Naive thymus-derived CD4-positive, alpha-beta T cell (primary cell): ENCODE measurements at regions of chr16 and their contacts with region 1.

Region 1: DNA sequence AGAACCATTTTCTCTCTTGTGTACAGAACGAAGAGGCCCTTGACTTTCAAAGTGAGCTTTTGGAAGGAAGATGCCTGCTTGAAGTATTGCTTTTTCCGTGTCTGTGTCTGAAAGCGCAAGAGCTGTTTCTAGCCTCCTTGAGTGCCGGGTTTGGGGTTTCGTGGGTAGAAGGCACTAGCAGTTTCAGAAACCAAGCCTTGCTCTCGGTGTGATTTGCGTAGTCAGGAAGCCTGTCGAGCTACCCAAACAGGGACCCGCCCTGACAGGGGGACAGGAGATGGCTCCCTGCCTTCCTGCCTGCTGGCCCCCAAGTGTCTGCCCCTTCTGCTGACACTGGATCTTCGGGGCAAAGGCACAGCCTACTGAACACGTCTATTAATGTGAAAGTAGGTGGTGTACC is 322.0 kb downstream of the MAF start:
- DNase-seq: peak in 8 of 9 donors; percentile 14 to 64 (median 44)
- ATAC-seq: peak; percentile 85
- H3K4me3 ChIP-seq: peak overlapping the region; percentile 22
- H3K4me3 Mint-ChIP-seq: peak overlapping the region; percentile 5 to 74 (median 55)
- H3K27ac ChIP-seq: no peak overlapping the region
- H3K27ac Mint-ChIP-seq: peak overlapping the region in 8 of 9 donors; percentile 10 to 91 (median 63)
- H3K4me1 ChIP-seq: peaks cover 16 to 53% of the 10 kb centered on the region in 2 donors
- H3K4me1 Mint-ChIP-seq: peaks cover 16 to 83% (median 34%) of the 10 kb centered on the region in 7 donors
- H3K27me3 ChIP-seq: no peaks in the 10 kb centered on the region
- H3K27me3 Mint-ChIP-seq: peaks cover 0 to 26% (median 4%) of the 10 kb centered on the region in 5 donors

Region 2: GRCh38 chr16:78823027-78823426 is 455.5 kb before region 1 on chr16:
- CTCF ChIA-PET with region 1: no interaction called
- POLR2A ChIA-PET with region 1: no interaction called
- intact Hi-C with region 1: no loop called
- DNase-seq: no peak
- ATAC-seq: no peak
- H3K4me3 ChIP-seq: no peak overlapping the region
- H3K4me3 Mint-ChIP-seq: no peak overlapping the region
- H3K27ac ChIP-seq: no peak overlapping the region
- H3K27ac Mint-ChIP-seq: no peak overlapping the region
- H3K4me1 ChIP-seq: no peaks in the 10 kb centered on the region
- H3K4me1 Mint-ChIP-seq: no peaks in the 10 kb centered on the region
- H3K27me3 ChIP-seq: no peaks in the 10 kb centered on the region
- H3K27me3 Mint-ChIP-seq: no peaks in the 10 kb centered on the region

Region 3: DNA sequence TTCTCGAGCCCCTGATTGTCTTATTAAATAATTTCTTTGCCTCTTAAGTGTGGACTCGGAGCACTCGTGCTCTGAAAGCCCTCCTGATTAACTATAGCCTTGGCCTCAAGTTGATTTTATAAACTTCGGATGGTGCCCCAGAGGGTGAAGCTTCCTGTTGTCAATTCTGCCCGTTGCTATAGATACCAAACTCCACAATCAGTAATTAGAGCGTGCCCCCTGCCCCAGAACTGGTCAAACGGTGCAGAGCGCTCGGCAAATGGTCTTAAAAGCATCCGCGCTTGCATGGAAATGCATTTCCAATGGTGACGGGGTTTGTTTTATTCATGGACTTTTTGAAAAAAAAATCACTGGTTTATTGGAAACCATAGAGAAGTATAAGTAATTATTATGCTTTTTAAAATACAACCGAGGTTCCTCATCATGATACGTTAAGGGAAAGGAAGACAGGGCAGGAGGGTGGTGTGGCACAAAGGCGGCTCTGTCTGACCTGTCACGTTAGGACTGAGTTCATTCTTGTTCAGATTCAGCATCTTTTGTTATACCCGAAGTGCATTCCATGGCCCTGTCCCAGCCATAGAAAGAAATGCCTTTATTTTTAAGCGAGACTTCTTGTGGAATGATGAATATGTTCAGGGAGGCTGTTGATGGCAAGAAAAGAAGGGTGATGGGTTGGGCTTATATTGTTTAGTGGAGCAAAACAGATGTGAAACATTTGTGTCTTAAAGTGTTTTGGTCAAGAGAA is 154.3 kb before region 1 on chr16:
- CTCF ChIA-PET with region 1: no interaction called
- POLR2A ChIA-PET with region 1: no interaction called
- intact Hi-C with region 1: no loop called
- DNase-seq: no peak
- ATAC-seq: no peak
- H3K4me3 ChIP-seq: no peak overlapping the region
- H3K4me3 Mint-ChIP-seq: no peak overlapping the region
- H3K27ac ChIP-seq: no peak overlapping the region
- H3K27ac Mint-ChIP-seq: no peak overlapping the region
- H3K4me1 ChIP-seq: no peaks in the 10 kb centered on the region
- H3K4me1 Mint-ChIP-seq: peaks cover 0 to 1% (median 0%) of the 10 kb centered on the region in 7 donors
- H3K27me3 ChIP-seq: no peaks in the 10 kb centered on the region
- H3K27me3 Mint-ChIP-seq: no peaks in the 10 kb centered on the region

Region 4: GRCh38 chr16:79170555-79171246 is 107.8 kb before region 1 on chr16:
- CTCF ChIA-PET with region 1: no interaction called
- POLR2A ChIA-PET with region 1: no interaction called
- intact Hi-C with region 1: no loop called
- DNase-seq: no peak
- ATAC-seq: peak; percentile 69
- H3K4me3 ChIP-seq: no peak overlapping the region
- H3K4me3 Mint-ChIP-seq: no peak overlapping the region
- H3K27ac ChIP-seq: no peak overlapping the region
- H3K27ac Mint-ChIP-seq: no peak overlapping the region
- H3K4me1 ChIP-seq: no peaks in the 10 kb centered on the region
- H3K4me1 Mint-ChIP-seq: peaks cover 0 to 22% (median 4%) of the 10 kb centered on the region in 7 donors
- H3K27me3 ChIP-seq: no peaks in the 10 kb centered on the region
- H3K27me3 Mint-ChIP-seq: peaks cover 0 to 9% (median 0%) of the 10 kb centered on the region in 5 donors

Region 5: GRCh38 chr16:79213214-79213613 is 65.3 kb before region 1 on chr16:
- CTCF ChIA-PET with region 1: no interaction called
- POLR2A ChIA-PET with region 1: no interaction called
- intact Hi-C with region 1: loop called in 1 of 2 experiments (anchors 10 kb)
- DNase-seq: no peak
- ATAC-seq: no peak
- H3K4me3 ChIP-seq: no peak overlapping the region
- H3K4me3 Mint-ChIP-seq: no peak overlapping the region
- H3K27ac ChIP-seq: no peak overlapping the region
- H3K27ac Mint-ChIP-seq: no peak overlapping the region
- H3K4me1 ChIP-seq: peaks cover 3 to 13% of the 10 kb centered on the region in 2 donors
- H3K4me1 Mint-ChIP-seq: peaks cover 2 to 19% (median 10%) of the 10 kb centered on the region in 7 donors
- H3K27me3 ChIP-seq: no peaks in the 10 kb centered on the region
- H3K27me3 Mint-ChIP-seq: no peaks in the 10 kb centered on the region

Region 6: GRCh38 chr16:79261481-79261940 is 17.0 kb before region 1 on chr16:
- CTCF ChIA-PET with region 1: no interaction called
- POLR2A ChIA-PET with region 1: no interaction called
- intact Hi-C with region 1: no loop called
- DNase-seq: peak in 3 of 9 donors; percentile 13 to 34 (median 14)
- ATAC-seq: peak; percentile 65
- H3K4me3 ChIP-seq: no peak overlapping the region
- H3K4me3 Mint-ChIP-seq: no peak overlapping the region
- H3K27ac ChIP-seq: no peak overlapping the region
- H3K27ac Mint-ChIP-seq: peak overlapping the region in 1 of 9 donors; percentile 31
- H3K4me1 ChIP-seq: no peaks in the 10 kb centered on the region
- H3K4me1 Mint-ChIP-seq: peaks cover 0 to 28% (median 0%) of the 10 kb centered on the region in 7 donors
- H3K27me3 ChIP-seq: peaks cover 0 to 3% of the 10 kb centered on the region in 2 donors
- H3K27me3 Mint-ChIP-seq: peaks cover 5 to 37% (median 26%) of the 10 kb centered on the region in 5 donors

Region 7: DNA sequence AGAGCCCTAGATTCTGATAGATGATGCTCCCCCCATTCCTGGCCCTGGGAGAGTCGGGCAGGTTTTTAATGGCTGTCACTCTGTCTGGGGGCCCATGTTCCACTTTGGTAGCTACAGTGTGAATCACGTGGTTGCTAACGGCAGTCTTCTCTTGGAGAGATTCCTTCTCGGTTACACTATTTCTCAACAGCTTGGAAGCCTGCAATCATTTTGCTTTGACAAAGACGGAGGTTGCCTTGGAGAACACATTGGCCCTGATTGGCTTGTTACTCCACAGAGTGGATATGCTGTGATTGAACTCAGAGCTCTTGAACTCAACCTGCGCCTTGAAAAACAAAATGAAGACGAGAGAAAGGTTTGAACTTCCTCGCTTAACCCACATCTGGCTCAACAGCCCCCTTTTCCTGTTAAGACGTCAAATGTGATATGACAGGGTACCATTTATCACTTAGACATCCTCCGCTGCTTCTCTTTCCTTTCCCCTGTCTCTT is 103.1 kb after region 1 on chr16:
- CTCF ChIA-PET with region 1: no interaction called
- POLR2A ChIA-PET with region 1: no interaction called
- intact Hi-C with region 1: loop called in 1 of 2 experiments (anchors 10 kb)
- DNase-seq: peak in 4 of 9 donors; percentile 25 to 38 (median 27)
- ATAC-seq: peak; percentile 59
- H3K4me3 ChIP-seq: peak overlapping the region; percentile 27
- H3K4me3 Mint-ChIP-seq: peak overlapping the region; percentile 25 to 81 (median 72)
- H3K27ac ChIP-seq: no peak overlapping the region
- H3K27ac Mint-ChIP-seq: peak overlapping the region in 5 of 9 donors; percentile 17 to 61 (median 20)
- H3K4me1 ChIP-seq: peaks cover 14 to 31% of the 10 kb centered on the region in 2 donors
- H3K4me1 Mint-ChIP-seq: peaks cover 13 to 28% (median 25%) of the 10 kb centered on the region in 7 donors
- H3K27me3 ChIP-seq: no peaks in the 10 kb centered on the region
- H3K27me3 Mint-ChIP-seq: peaks cover 0 to 7% (median 3%) of the 10 kb centered on the region in 5 donors

Region 8: GRCh38 chr16:79415983-79416640 is 137.6 kb after region 1 on chr16:
- CTCF ChIA-PET with region 1: no interaction called
- POLR2A ChIA-PET with region 1: no interaction called
- intact Hi-C with region 1: loop called in 1 of 2 experiments (anchors 10 kb)
- DNase-seq: peak in 5 of 9 donors; percentile 16 to 27 (median 17)
- ATAC-seq: peak; percentile 57
- H3K4me3 ChIP-seq: no peak overlapping the region
- H3K4me3 Mint-ChIP-seq: peak overlapping the region; percentile 9 to 76 (median 62)
- H3K27ac ChIP-seq: no peak overlapping the region
- H3K27ac Mint-ChIP-seq: peak overlapping the region in 7 of 9 donors; percentile 4 to 75 (median 65)
- H3K4me1 ChIP-seq: peaks cover 12 to 22% of the 10 kb centered on the region in 2 donors
- H3K4me1 Mint-ChIP-seq: peaks cover 11 to 44% (median 29%) of the 10 kb centered on the region in 7 donors
- H3K27me3 ChIP-seq: no peaks in the 10 kb centered on the region
- H3K27me3 Mint-ChIP-seq: peaks cover 0 to 7% (median 0%) of the 10 kb centered on the region in 5 donors